Activated CD4-positive, alpha-beta T cell treated with anti-CD3 and anti-CD28 coated beads, Interleukin-2, amount 10 ng/mL, durations not matched to agents 24 days and 14 days (primary cell): ENCODE measurements at regions of chr13 and their contacts with region 1.

Region 1: GRCh38 chr13:30617315-30618185 is at the start of gene USPL1:
- DNase-seq: peak; percentile 100
- H3K4me3 Mint-ChIP-seq: no peak within 1 kb of the TSS
- H3K27ac Mint-ChIP-seq: no peak within 1 kb of the TSS
- H3K4me1 Mint-ChIP-seq: peaks cover 30% of the 10 kb centered on the region
- H3K27me3 Mint-ChIP-seq: no peaks in the 10 kb centered on the region
- total RNA-seq, gene USPL1: 16.2 and 18.7 TPM in 2 replicates

Region 2: GRCh38 chr13:29935309-29935981 is 682.1 kb before region 1 on chr13:
- intact Hi-C with region 1: loop called (anchors 1 kb)
- DNase-seq: peak; percentile 94
- H3K4me3 Mint-ChIP-seq: peak overlapping the region; percentile 87
- H3K27ac Mint-ChIP-seq: peak overlapping the region; percentile 94
- H3K4me1 Mint-ChIP-seq: peaks cover 47% of the 10 kb centered on the region
- H3K27me3 Mint-ChIP-seq: no peaks in the 10 kb centered on the region

Region 3: DNA sequence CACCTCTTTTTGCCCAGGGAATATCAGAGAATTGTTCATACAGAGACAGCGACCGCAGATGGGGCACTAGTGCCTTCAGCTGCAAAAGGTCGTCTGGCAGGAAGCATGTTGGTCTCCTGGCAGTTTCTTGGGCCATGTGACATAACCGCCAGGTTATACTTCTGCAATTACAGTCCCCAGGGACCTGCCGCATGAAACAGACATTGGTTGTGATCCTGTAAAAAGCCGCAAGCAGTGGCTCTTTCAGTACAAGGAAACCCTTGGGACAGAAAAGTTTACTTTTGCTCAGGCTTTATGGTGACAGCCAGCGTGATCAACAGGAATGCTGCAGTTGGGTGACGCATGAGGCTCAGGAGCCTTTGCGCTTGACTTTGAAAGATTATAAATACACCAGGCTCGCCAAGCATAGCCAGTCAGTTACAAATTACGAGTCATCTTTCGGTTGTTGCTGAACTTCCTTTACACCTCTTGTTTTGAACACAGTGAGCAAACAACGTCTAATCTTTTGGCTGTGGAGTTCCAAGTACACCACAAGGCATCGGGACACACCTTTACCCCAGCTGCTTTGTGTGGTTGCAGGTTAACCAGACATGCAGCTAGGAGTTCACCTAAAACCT is 245.8 kb before region 1 on chr13:
- intact Hi-C with region 1: loop called (anchors 2 kb)
- DNase-seq: peak; percentile 91
- H3K4me3 Mint-ChIP-seq: peak overlapping the region; percentile 85
- H3K27ac Mint-ChIP-seq: peak overlapping the region; percentile 91
- H3K4me1 Mint-ChIP-seq: peaks cover 75% of the 10 kb centered on the region
- H3K27me3 Mint-ChIP-seq: no peaks in the 10 kb centered on the region

Region 4: DNA sequence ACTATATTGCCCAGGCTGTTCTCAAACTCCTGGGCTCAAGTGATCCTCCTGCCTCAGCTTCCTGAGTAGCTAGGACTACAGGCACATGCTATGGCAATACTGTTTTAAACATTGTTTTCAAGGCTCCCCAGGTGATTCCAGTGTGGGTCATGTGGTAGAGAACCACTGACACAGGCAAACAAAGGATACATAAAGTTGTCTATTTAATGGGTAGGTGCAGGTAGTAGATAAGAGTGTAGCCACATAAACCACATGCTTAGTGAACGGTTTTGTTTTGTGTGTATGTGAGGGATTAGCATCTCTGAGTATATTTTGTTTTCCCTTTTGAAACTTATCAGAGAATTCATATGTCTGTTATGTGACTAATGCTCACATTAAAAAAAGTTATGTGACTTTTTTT is 36.9 kb after region 1 on chr13:
- intact Hi-C with region 1: loop called (anchors 1 kb)
- DNase-seq: peak; percentile 86
- H3K4me3 Mint-ChIP-seq: peak overlapping the region; percentile 66
- H3K27ac Mint-ChIP-seq: peak overlapping the region; percentile 85
- H3K4me1 Mint-ChIP-seq: peaks cover 32% of the 10 kb centered on the region
- H3K27me3 Mint-ChIP-seq: no peaks in the 10 kb centered on the region

Region 5: DNA sequence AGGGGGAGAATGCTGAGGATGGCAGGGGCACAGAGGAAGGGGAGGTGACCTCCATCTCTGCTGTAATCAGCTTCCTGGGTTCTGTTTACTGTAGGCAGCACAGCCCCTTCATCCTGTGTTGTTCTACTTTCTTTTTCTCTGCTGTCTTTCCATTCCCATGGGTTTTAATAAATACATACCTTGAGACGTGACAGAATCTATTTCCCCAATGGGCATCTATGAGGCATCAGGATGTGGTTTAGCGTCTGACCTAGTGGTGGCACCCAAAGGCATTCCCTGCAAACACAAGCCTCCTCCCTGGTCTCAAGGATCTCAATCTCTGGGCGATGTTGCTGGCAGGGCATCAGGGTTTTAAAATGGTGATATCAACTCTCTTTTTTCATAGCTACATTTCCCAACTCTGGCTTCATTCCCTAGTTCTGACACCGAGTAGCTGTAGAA is 178.6 kb after region 1 on chr13:
- intact Hi-C with region 1: loop called (anchors 2 kb)
- DNase-seq: peak; percentile 71
- H3K4me3 Mint-ChIP-seq: peak overlapping the region; percentile 28
- H3K27ac Mint-ChIP-seq: peak overlapping the region; percentile 46
- H3K4me1 Mint-ChIP-seq: peaks cover 31% of the 10 kb centered on the region
- H3K27me3 Mint-ChIP-seq: no peaks in the 10 kb centered on the region

Region 6: GRCh38 chr13:31361673-31362072 is 744.1 kb after region 1 on chr13:
- intact Hi-C with region 1: no loop called
- DNase-seq: no peak
- H3K4me3 Mint-ChIP-seq: no peak overlapping the region
- H3K27ac Mint-ChIP-seq: no peak overlapping the region
- H3K4me1 Mint-ChIP-seq: no peaks in the 10 kb centered on the region
- H3K27me3 Mint-ChIP-seq: no peaks in the 10 kb centered on the region